ENCODE measurements at regions of chr11 and their contacts with region 1.

Region 1: GRCh38 chr11:65560555-65561418 is 2.6 kb upstream of the LTBP3 start:
- DNase-seq: peak; percentile 56
- ATAC-seq: peak; percentile 3; the same call in 1 of the 2 replicates
- H3K4me3 ChIP-seq: peak overlapping the region; percentile 28; the same call in 1 of the 2 replicates
- H3K27ac ChIP-seq: peak overlapping the region; percentile 91
- H3K4me1 ChIP-seq: peaks cover 52% of the 10 kb centered on the region
- H3K27me3 ChIP-seq: no peaks in the 10 kb centered on the region
- CTCF ChIP-seq: no peak

Region 2: GRCh38 chr11:65321828-65322485 is 238.8 kb before region 1 on chr11:
- CTCF ChIA-PET with region 1: no interaction called
- POLR2A ChIA-PET with region 1: interaction called, 10 read pairs
- intact Hi-C with region 1: no loop called
- DNase-seq: no peak
- ATAC-seq: no peak
- H3K4me3 ChIP-seq: no peak overlapping the region
- H3K27ac ChIP-seq: no peak overlapping the region
- H3K4me1 ChIP-seq: peaks cover 8% of the 10 kb centered on the region
- H3K27me3 ChIP-seq: no peaks in the 10 kb centered on the region
- CTCF ChIP-seq: no peak

Region 3: GRCh38 chr11:65524741-65525545 is 35.8 kb before region 1 on chr11 and contains the start of gene SCYL1:
- CTCF ChIA-PET with region 1: interaction called, 12 read pairs
- POLR2A ChIA-PET with region 1: no interaction called
- intact Hi-C with region 1: no loop called
- DNase-seq: peak; percentile 70
- ATAC-seq: peak; percentile 90
- H3K4me3 ChIP-seq: peak within 1 kb of the TSS; percentile 99
- H3K27ac ChIP-seq: peak within 1 kb of the TSS; percentile 52
- H3K4me1 ChIP-seq: peaks cover 11% of the 10 kb centered on the region
- H3K27me3 ChIP-seq: no peaks in the 10 kb centered on the region
- CTCF ChIP-seq: no peak
- total RNA-seq, gene SCYL1: 201 and 262 TPM in 2 replicates